Transverse colon (tissue), 4 donors: ENCODE measurements at regions of chrX and their contacts with region 1.

Region 1: DNA sequence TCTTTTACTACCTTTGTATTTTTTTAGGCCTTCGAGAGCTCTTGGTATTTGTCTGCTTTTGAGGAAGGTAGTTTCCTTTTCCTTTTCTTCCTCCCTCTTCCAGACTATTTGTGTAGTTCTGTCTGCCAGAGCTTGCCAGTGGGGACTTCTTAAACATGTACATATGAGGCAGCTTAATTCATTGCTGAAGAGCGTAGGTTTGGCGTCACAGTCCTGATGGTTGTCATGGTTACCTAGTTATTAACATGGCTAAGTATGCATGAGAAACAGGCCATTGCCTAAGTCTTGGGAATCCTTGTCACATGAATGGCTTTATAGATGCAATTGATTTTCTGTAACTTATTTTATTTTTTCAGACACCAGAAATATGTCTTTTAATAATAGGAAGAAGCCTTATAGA is 48.5 kb upstream of the ARMCX2 start:
- DNase-seq: no peak
- H3K4me3 ChIP-seq: no peak overlapping the region
- H3K27ac ChIP-seq: no peak overlapping the region
- H3K4me1 ChIP-seq: no peaks in the 10 kb centered on the region
- H3K27me3 ChIP-seq: no peaks in the 10 kb centered on the region
- CTCF ChIP-seq: no peak
- EP300 ChIP-seq: no peak
- POLR2A ChIP-seq: no peak

Region 2: GRCh38 chrX:100969936-100970335 is 738.2 kb before region 1 on chrX:
- in situ Hi-C with region 1: no loop called
- intact Hi-C with region 1: loop called (anchors 5 kb)
- DNase-seq: no peak
- H3K4me3 ChIP-seq: no peak overlapping the region
- H3K27ac ChIP-seq: no peak overlapping the region
- H3K4me1 ChIP-seq: no peaks in the 10 kb centered on the region
- H3K27me3 ChIP-seq: no peaks in the 10 kb centered on the region
- CTCF ChIP-seq: no peak
- EP300 ChIP-seq: no peak
- POLR2A ChIP-seq: no peak

Region 3: DNA sequence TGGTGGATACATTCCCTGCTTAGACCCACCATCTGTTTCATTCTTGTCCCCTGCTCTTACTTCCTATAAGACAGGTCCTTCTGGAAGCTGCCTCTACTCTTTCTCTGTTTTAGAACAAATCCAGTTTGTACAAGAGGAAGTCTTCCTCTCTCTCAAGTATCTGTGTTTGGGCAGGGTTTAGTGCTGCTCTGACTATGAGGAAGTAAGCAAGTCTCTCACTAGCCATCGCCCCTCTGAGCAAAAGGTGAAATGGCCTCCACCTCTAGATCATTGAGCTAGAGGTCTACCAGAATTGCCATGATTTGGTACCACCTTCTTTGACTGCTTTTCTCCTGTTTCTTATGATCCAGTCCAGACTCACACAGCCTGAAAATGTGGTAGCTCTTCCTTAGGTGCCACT is 330.6 kb before region 1 on chrX:
- in situ Hi-C with region 1: no loop called
- intact Hi-C with region 1: no loop called
- DNase-seq: no peak
- H3K4me3 ChIP-seq: no peak overlapping the region
- H3K27ac ChIP-seq: no peak overlapping the region
- H3K4me1 ChIP-seq: no peaks in the 10 kb centered on the region
- H3K27me3 ChIP-seq: no peaks in the 10 kb centered on the region
- CTCF ChIP-seq: no peak
- EP300 ChIP-seq: no peak
- POLR2A ChIP-seq: no peak

Region 4: DNA sequence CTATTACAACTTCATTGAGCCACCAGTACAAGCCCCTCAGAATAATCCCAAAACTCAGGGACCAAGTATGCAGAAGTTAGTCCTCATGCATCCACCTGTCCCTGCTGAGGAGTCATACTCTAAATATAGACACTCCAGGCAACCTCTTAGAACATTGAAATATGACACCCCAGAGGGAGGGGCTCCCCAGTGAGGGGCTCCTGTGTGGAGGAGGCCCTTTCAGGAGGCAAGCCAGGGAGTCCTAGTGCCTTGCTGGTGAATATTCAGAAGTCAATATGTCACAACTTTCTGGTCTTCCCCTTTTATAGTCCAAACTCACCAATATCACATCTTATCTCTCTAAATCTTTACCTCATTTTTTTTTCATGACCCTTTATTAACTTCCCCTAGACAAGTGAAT is 88.8 kb before region 1 on chrX:
- in situ Hi-C with region 1: no loop called
- intact Hi-C with region 1: no loop called
- DNase-seq: no peak
- H3K4me3 ChIP-seq: no peak overlapping the region
- H3K27ac ChIP-seq: no peak overlapping the region
- H3K4me1 ChIP-seq: peaks cover 0 to 11% (median 1%) of the 10 kb centered on the region in 4 donors
- H3K27me3 ChIP-seq: no peaks in the 10 kb centered on the region
- CTCF ChIP-seq: no peak
- EP300 ChIP-seq: no peak
- POLR2A ChIP-seq: no peak

Region 5: GRCh38 chrX:101958133-101958532 is 250.0 kb after region 1 on chrX:
- in situ Hi-C with region 1: no loop called
- intact Hi-C with region 1: no loop called
- DNase-seq: no peak
- H3K4me3 ChIP-seq: no peak overlapping the region
- H3K27ac ChIP-seq: no peak overlapping the region
- H3K4me1 ChIP-seq: no peaks in the 10 kb centered on the region
- H3K27me3 ChIP-seq: no peaks in the 10 kb centered on the region
- CTCF ChIP-seq: no peak
- EP300 ChIP-seq: no peak
- POLR2A ChIP-seq: no peak